Lower leg skin (tissue), 4 donors: ENCODE measurements at regions of chr10 and their contacts with region 1.

Region 1: GRCh38 chr10:28250782-28251181 is 52.1 kb downstream of the MPP7 start:
- DNase-seq: no peak
- H3K4me3 ChIP-seq: no peak overlapping the region
- CTCF ChIP-seq: no peak
- POLR2A ChIP-seq: no peak

Region 2: DNA sequence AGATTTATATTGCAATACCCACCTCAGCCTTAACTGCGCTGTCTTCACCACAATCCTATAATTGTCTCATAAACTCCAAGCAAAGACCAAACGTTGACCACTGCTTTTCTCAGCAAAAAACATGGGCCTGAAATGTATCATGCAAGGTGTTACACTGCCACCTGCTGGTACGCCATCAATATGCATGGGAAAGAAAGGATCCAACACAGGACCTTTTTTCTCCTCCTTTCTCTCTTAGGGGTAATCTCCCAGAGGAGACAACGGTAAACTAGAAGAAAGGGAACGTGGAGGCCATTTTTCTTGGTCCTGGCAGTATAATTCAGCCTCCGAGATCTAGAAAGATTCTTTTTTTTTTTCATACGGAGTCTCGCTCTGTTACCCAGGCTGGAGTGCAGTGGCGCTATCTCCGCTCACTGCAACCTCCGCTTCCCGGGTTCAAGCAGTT is 131.1 kb after region 1 on chr10:
- intact Hi-C with region 1: loop called (anchors 5 kb)
- DNase-seq: peak; percentile 80 to 94
- H3K4me3 ChIP-seq: no peak overlapping the region
- CTCF ChIP-seq: peak in 1 of 3 donors; percentile 64
- POLR2A ChIP-seq: no peak